Endothelial cell of umbilical vein (primary cell): ENCODE measurements at regions of chr11 and their contacts with region 1.

Region 1: GRCh38 chr11:447923-448731 is 2.0 kb upstream of the PTDSS2 start:
- DNase-seq: peak; percentile 91
- H3K4me3 ChIP-seq: peak overlapping the region; percentile 7 to 58 (median 8)
- H3K27ac ChIP-seq: peak overlapping the region; percentile 34
- H3K4me1 ChIP-seq: peaks cover 14% of the 10 kb centered on the region
- H3K27me3 ChIP-seq: peaks cover 0 to 2% of the 10 kb centered on the region in 2 experiments
- CTCF ChIP-seq: peak; percentile 85 to 86
- POLR2A ChIP-seq: peak; percentile 82

Region 2: DNA sequence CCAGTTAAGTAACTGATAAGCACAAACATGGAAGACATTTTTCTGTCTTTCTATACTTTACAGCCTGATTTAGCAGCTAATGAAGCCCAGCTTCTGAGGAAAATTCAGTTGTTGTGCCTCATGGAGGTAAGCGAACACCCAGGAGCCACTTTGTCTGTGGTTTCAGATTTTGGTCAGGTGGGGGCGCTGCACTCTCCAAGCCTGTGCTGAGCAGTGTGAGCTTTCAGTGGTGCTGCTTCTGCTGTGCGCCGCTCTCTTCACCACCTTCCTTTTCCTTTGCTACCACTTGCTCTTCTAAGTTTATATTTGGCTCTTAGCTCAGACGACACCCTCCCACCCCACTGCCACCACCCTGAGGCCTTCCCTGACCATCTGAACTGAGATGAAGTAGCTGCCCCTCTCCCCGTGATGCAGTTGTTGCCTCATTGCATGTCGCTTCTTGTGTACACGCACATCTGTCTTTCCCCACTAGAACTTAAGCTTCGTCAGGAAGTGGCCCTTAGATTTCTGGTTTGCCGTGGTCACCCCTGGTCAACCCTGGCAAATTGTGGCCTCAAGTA is 197.3 kb before region 1 on chr11:
- CTCF ChIA-PET with region 1: interaction called, 13 read pairs
- POLR2A ChIA-PET with region 1: no interaction called
- dilution Hi-C with region 1: no loop called
- intact Hi-C with region 1: loop called (anchors 5 kb)
- DNase-seq: peak; percentile 61
- H3K4me3 ChIP-seq: no peak overlapping the region
- H3K27ac ChIP-seq: no peak overlapping the region
- H3K4me1 ChIP-seq: no peaks in the 10 kb centered on the region
- H3K27me3 ChIP-seq: no peaks in the 10 kb centered on the region
- CTCF ChIP-seq: peak; percentile 67 to 81
- POLR2A ChIP-seq: no peak

Region 3: GRCh38 chr11:269146-269890 is 178.8 kb before region 1 on chr11:
- CTCF ChIA-PET with region 1: no interaction called
- POLR2A ChIA-PET with region 1: no interaction called
- dilution Hi-C with region 1: no loop called
- intact Hi-C with region 1: no loop called
- DNase-seq: no peak
- H3K4me3 ChIP-seq: no peak overlapping the region
- H3K27ac ChIP-seq: no peak overlapping the region
- H3K4me1 ChIP-seq: no peaks in the 10 kb centered on the region
- H3K27me3 ChIP-seq: peaks cover 4 to 7% of the 10 kb centered on the region in 2 experiments
- CTCF ChIP-seq: no peak
- POLR2A ChIP-seq: no peak

Region 4: GRCh38 chr11:363948-364761 is 84.0 kb before region 1 on chr11:
- CTCF ChIA-PET with region 1: interaction called, 13 read pairs
- POLR2A ChIA-PET with region 1: no interaction called
- dilution Hi-C with region 1: no loop called
- intact Hi-C with region 1: no loop called
- DNase-seq: peak; percentile 37
- H3K4me3 ChIP-seq: no peak overlapping the region
- H3K27ac ChIP-seq: no peak overlapping the region
- H3K4me1 ChIP-seq: no peaks in the 10 kb centered on the region
- H3K27me3 ChIP-seq: peaks cover 13% of the 10 kb centered on the region in 2 experiments
- CTCF ChIP-seq: peak in 1 of 2 donors; percentile 61
- POLR2A ChIP-seq: no peak

Region 5: DNA sequence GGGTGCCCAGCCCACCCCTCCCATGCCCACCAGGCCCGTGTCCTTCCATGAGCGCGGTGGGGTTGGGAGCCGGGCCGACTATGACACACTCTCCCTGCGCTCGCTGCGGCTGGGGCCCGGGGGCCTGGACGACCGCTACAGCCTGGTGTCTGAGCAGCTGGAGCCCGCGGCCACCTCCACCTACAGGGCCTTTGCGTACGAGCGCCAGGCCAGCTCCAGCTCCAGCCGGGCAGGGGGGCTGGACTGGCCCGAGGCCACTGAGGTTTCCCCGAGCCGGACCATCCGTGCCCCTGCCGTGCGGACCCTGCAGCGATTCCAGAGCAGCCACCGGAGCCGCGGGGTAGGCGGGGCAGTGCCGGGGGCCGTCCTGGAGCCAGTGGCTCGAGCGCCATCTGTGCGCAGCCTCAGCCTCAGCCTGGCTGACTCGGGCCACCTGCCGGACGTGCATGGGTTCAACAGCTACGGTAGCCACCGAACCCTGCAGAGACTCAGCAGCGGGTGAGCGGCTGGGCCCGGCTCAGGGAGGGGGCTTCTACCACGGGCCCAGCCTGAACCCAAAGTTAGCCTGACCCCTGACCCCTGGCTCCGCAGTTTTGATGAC is 51.1 kb before region 1 on chr11:
- CTCF ChIA-PET with region 1: interaction called, 55 read pairs
- POLR2A ChIA-PET with region 1: no interaction called
- dilution Hi-C with region 1: no loop called
- intact Hi-C with region 1: loop called (anchors 1 kb)
- DNase-seq: peak; percentile 66
- H3K4me3 ChIP-seq: peak overlapping the region; percentile 6 to 43 (median 35)
- H3K27ac ChIP-seq: no peak overlapping the region
- H3K4me1 ChIP-seq: peaks cover 2% of the 10 kb centered on the region
- H3K27me3 ChIP-seq: peaks cover 0 to 3% of the 10 kb centered on the region in 2 experiments
- CTCF ChIP-seq: peak; percentile 44 to 80
- POLR2A ChIP-seq: no peak

Region 6: DNA sequence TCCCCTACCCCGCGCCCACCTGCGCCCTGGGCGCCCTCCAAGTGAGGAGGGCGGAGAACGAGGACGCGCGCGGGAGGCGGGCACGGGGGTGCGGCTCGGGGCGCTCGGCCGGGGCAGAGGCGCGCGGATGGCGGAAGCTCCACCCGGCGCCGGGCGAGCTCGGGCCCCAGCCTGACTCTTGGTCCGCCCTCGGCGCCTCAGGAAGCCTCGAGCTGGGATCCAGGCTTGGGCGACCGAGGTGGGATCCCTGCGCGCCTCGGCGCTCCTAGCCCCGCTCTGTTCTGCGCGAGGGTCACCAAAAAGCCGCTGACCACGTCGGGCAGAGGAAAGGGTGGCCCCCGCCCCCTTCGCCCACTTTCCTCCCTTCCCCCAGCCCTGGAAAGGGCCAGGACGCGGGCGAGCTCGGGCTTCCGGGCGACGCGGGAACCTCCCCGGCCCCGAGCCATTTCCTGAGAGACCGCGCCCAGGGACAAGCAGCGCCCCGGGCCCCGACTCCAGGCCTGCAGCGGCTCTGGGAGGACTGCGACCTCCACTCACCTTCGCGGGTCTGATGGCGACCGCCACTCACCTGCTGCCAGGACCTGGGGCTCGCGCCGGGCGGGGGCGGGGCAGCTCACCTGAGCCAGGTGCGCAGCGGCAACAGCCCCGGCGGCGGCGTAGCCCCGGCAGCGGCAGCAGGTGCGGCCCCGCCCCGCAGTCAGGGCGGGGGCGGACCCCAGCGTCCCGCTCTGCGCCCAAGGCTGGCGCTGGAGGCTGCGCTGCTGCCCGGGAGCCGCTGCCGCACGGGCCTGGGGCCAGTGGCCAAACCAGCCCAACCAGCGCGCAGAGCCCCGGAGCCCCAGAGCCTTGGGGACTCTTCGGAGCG is 31.1 kb before region 1 on chr11:
- CTCF ChIA-PET with region 1: interaction called, 32 read pairs
- POLR2A ChIA-PET with region 1: no interaction called
- dilution Hi-C with region 1: no loop called
- intact Hi-C with region 1: loop called (anchors 1 kb)
- DNase-seq: peak; percentile 18
- H3K4me3 ChIP-seq: peak overlapping the region; percentile 20 to 40 (median 30)
- H3K27ac ChIP-seq: no peak overlapping the region
- H3K4me1 ChIP-seq: peaks cover 21% of the 10 kb centered on the region
- H3K27me3 ChIP-seq: no peaks in the 10 kb centered on the region
- CTCF ChIP-seq: no peak
- POLR2A ChIP-seq: peak; percentile 58

Region 7: DNA sequence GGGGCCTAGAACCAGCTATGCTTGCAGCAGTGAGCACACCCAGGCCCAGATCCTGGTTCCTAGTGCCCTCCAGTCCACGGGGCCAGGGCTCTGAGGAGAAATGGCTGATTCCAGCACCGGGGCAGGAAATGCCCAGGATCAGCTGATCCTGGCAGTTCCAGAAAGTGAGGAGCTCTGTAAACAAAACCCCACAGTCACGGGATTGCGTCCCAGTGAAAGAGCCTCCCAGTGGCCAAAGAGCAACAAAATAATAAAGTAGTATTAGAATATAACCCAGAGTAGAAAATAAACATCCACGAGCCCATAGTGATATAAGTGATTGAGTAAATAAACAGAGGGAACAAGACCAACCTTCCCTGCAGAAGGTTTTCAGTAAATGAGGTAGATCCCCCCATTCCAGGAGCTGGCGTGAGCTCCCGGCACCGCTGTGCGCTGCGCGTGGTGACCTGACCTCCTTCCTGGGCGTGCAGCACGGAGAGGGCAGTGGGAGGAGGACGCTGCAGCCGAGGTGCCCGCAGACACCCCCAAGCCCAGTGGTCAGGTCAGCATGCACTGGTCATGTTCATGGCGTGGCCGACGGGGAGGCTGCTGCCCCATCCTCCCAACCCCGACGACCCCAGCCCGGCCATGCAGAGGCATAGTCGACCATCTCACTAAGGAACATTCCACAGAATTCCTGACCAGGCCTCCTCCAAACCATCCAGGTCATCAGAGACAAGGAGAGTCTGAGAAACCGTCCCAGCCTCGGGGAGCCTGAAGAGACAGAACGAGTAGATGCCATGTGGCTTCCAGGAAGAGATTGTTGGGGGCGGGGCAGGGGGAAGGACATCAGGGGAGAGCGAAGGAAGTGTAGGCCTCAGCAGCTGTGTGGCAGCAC is 21.8 kb after region 1 on chr11:
- CTCF ChIA-PET with region 1: interaction called, 12 read pairs
- POLR2A ChIA-PET with region 1: no interaction called
- dilution Hi-C with region 1: no loop called
- intact Hi-C with region 1: loop called (anchors 1 kb)
- DNase-seq: peak; percentile 90
- H3K4me3 ChIP-seq: no peak overlapping the region
- H3K27ac ChIP-seq: peak overlapping the region; percentile 18
- H3K4me1 ChIP-seq: peaks cover 10% of the 10 kb centered on the region
- H3K27me3 ChIP-seq: no peaks in the 10 kb centered on the region
- CTCF ChIP-seq: peak in 1 of 2 donors; percentile 11
- POLR2A ChIP-seq: peak; percentile 30

Region 8: DNA sequence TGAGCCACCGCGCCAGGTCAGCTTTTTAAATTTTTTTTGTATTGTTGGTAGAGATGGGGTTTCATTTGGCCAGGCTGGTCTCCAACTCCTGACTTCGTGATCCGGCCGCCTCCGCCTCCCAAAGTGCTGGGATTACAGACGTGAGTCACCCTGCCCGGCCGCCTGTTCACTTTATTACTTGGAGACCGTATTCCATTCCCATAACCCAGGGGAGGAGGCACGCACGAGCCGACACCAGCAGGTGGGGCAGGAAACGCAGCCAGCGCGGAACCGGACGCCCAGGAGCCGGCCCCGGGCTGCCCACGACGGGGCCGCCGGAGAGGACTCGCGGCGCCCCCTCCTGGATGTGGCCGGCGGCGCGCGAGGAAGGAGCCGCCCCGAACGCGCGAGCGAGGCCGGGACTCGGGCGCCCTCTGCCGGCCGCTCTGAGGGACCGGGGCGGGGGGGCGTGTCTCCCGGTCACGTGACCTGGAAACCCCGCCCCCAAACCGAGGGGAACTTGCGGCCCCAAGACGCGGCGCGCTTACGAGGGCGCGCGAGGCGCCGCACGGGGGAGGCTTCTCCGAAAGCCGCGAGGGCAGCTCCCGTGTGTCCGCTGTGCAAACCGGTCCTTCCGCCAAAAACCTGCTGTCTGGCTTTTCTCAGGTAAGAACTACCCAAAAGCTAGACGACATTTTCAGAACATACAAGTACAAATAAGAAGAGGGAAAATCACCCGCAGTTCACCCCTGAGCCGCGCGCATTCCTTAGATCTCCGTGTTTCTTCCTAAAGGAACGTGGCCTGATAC is 70.5 kb after region 1 on chr11:
- CTCF ChIA-PET with region 1: interaction called, 8 read pairs
- POLR2A ChIA-PET with region 1: no interaction called
- dilution Hi-C with region 1: no loop called
- intact Hi-C with region 1: loop called (anchors 1 kb)
- DNase-seq: peak; percentile 97
- H3K4me3 ChIP-seq: no peak overlapping the region
- H3K27ac ChIP-seq: peak overlapping the region; percentile 36
- H3K4me1 ChIP-seq: peaks cover 3% of the 10 kb centered on the region
- H3K27me3 ChIP-seq: no peaks in the 10 kb centered on the region
- CTCF ChIP-seq: peak; percentile 91 to 100
- POLR2A ChIP-seq: no peak